Caco-2 (cell line): ENCODE measurements at regions of chr7 and their contacts with region 1.

Region 1: GRCh38 chr7:142632291-142633134 is 116.8 kb upstream of the PRSS1 start:
- DNase-seq: peak; percentile 48 to 76
- H3K4me3 ChIP-seq: no peak overlapping the region
- H3K4me3 Mint-ChIP-seq: no peak overlapping the region
- H3K27ac Mint-ChIP-seq: no peak overlapping the region
- H3K4me1 ChIP-seq: no peaks in the 10 kb centered on the region
- H3K4me1 Mint-ChIP-seq: no peaks in the 10 kb centered on the region
- H3K27me3 ChIP-seq: peaks cover 1% of the 10 kb centered on the region
- H3K27me3 Mint-ChIP-seq: peaks cover 20% of the 10 kb centered on the region
- CTCF ChIP-seq: peak; percentile 72 to 74

Region 2: GRCh38 chr7:142557971-142558582 is 74.4 kb before region 1 on chr7:
- CTCF ChIA-PET with region 1: no interaction called
- POLR2A ChIA-PET with region 1: no interaction called
- intact Hi-C with region 1: no loop called
- DNase-seq: peak; percentile 43 to 53
- H3K4me3 ChIP-seq: no peak overlapping the region
- H3K4me3 Mint-ChIP-seq: no peak overlapping the region
- H3K27ac Mint-ChIP-seq: no peak overlapping the region
- H3K4me1 ChIP-seq: peaks cover 4% of the 10 kb centered on the region; the same call in 1 of the 2 replicates
- H3K4me1 Mint-ChIP-seq: peaks cover 5% of the 10 kb centered on the region
- H3K27me3 ChIP-seq: no peaks in the 10 kb centered on the region
- H3K27me3 Mint-ChIP-seq: peaks cover 13% of the 10 kb centered on the region
- CTCF ChIP-seq: peak; percentile 59 to 65

Region 3: DNA sequence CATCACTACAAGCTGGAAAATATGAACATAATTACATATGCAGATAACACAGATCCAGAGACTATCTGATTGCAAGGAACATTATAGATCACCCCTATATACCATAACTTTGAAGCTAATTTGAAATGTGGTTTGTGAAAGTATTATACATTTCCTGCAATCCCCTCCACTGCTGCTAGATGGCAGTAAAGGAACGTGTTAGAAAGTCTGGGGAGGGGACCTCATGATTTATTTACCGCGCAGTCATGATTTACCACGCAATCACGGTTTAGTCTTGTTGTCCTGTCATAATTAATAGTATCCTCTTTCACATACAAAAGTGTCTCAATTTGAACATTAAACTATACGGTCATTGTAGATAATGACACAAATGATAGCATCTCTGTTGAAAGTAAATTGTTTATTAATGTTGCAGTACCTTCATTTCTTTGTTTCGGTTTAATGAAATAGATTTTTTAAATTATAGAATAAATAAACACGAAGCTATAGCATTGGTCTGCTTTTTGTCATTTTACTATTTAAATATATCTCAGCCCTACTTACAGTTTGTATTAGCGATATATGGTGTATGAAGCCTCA is 28.6 kb before region 1 on chr7:
- CTCF ChIA-PET with region 1: interaction called, 10 read pairs
- POLR2A ChIA-PET with region 1: no interaction called
- intact Hi-C with region 1: loop called (anchors 1 kb)
- DNase-seq: peak; percentile 52 to 65
- H3K4me3 ChIP-seq: no peak overlapping the region
- H3K4me3 Mint-ChIP-seq: no peak overlapping the region
- H3K27ac Mint-ChIP-seq: no peak overlapping the region
- H3K4me1 ChIP-seq: no peaks in the 10 kb centered on the region
- H3K4me1 Mint-ChIP-seq: peaks cover 6% of the 10 kb centered on the region
- H3K27me3 ChIP-seq: no peaks in the 10 kb centered on the region
- H3K27me3 Mint-ChIP-seq: peaks cover 23% of the 10 kb centered on the region
- CTCF ChIP-seq: peak; percentile 79 to 93

Region 4: GRCh38 chr7:142711746-142712619 is 79.5 kb after region 1 on chr7:
- CTCF ChIA-PET with region 1: interaction called, 10 read pairs
- POLR2A ChIA-PET with region 1: no interaction called
- intact Hi-C with region 1: no loop called
- DNase-seq: peak in 1 of 2 experiments; percentile 33
- H3K4me3 ChIP-seq: no peak overlapping the region
- H3K4me3 Mint-ChIP-seq: no peak overlapping the region
- H3K27ac Mint-ChIP-seq: no peak overlapping the region
- H3K4me1 ChIP-seq: no peaks in the 10 kb centered on the region
- H3K4me1 Mint-ChIP-seq: no peaks in the 10 kb centered on the region
- H3K27me3 ChIP-seq: no peaks in the 10 kb centered on the region; the same call in 1 of the 2 replicates
- H3K27me3 Mint-ChIP-seq: peaks cover 13% of the 10 kb centered on the region
- CTCF ChIP-seq: peak; percentile 47 to 67

Region 5: DNA sequence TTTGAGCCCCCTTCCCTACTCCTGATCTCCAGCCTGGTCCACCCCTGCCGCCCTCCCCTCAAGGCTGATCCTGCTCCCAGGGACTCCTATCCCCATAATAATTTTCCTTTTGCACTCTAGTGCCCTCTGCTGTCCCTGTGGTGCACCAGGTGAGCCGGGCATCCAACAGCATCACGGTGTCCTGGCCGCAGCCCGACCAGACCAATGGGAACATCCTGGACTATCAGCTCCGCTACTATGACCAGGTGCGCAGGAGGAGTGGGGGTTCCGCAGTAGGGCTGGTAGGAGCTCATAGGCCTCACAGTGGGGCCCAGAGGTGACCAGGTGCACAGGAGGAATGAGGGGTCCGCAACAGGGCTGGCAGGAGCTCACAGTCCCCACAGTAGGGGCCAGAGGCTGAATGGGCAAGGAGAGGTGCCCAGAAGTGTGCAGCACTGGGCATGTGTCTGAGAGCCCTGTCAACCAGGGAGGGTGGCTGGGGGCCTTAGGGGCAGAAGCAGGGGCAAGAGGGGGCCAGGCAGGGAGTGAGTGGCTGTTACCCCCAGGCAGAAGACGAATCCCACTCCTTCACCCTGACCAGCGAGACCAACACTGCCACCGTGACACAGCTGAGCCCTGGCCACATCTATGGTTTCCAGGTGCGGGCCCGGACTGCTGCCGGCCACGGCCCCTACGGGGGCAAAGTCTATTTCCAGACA is 234.0 kb after region 1 on chr7:
- CTCF ChIA-PET with region 1: interaction called, 5 read pairs
- POLR2A ChIA-PET with region 1: no interaction called
- intact Hi-C with region 1: loop called (anchors 1 kb)
- DNase-seq: peak; percentile 61 to 70
- H3K4me3 ChIP-seq: no peak overlapping the region
- H3K4me3 Mint-ChIP-seq: no peak overlapping the region
- H3K27ac Mint-ChIP-seq: no peak overlapping the region
- H3K4me1 ChIP-seq: no peaks in the 10 kb centered on the region
- H3K4me1 Mint-ChIP-seq: no peaks in the 10 kb centered on the region
- H3K27me3 ChIP-seq: no peaks in the 10 kb centered on the region
- H3K27me3 Mint-ChIP-seq: no peaks in the 10 kb centered on the region
- CTCF ChIP-seq: peak; percentile 63 to 74

Region 6: DNA sequence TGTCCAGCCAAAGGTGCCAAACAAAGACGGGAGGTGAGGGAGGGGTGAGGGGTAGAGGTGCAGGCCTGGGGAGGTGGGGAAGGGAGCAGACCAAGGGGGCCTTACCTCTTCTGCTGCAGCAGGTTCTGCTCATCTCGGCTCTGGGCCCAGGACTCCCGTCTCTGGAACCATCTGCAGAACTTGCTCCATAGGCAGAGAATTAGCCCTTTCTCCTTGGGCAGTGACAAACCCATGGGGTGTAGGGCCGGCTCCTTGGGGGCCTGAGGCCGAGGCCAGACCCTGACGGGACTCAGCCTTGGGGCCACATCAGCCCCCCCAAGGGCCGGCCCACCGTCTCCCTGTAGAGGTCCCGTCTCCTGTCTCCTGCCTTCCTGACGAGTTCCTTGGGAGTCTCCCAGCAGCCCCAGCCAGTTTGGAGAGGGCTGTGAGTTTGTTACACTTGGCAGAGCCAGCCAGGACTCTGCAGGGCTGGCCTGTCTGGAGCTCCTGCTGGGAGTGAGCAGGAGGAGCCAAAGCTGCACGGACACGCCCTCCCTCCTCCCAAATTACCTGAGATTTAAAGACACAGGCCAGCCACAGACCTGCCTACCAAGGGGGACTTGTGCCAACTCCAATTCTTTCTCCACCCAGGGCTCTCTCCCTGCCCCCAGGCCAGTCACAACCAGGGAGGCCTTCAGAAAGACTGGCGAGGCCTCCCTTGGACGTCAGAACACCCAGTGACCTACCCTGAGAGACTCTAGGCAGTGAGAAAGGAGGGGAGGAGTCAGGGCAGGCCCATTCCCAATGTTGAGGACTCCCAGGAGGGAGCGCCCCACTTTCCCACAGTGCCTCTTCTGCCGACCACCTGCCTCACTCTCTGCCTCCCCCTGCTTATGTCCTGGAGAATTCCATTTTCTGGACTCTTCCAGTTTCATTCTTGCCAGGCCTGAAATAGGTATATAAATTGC is 253.0 kb after region 1 on chr7 and contains the start of gene TRPV6:
- CTCF ChIA-PET with region 1: no interaction called
- POLR2A ChIA-PET with region 1: no interaction called
- intact Hi-C with region 1: no loop called
- DNase-seq: peak; percentile 41 to 64
- H3K4me3 ChIP-seq: no peak within 1 kb of the TSS
- H3K4me3 Mint-ChIP-seq: no peak within 1 kb of the TSS
- H3K27ac Mint-ChIP-seq: no peak within 1 kb of the TSS
- H3K4me1 ChIP-seq: peaks cover 35% of the 10 kb centered on the region
- H3K4me1 Mint-ChIP-seq: peaks cover 8% of the 10 kb centered on the region
- H3K27me3 ChIP-seq: no peaks in the 10 kb centered on the region
- H3K27me3 Mint-ChIP-seq: no peaks in the 10 kb centered on the region
- CTCF ChIP-seq: no peak
- total RNA-seq, gene TRPV6: 2.3 and 4.0 TPM in 2 replicates